H1 (cell line): ENCODE measurements at regions of chr7 and their contacts with region 1.

Region 1: GRCh38 chr7:129210256-129210988 is 14.4 kb upstream of the AHCYL2 start:
- DNase-seq: peak; percentile 41 to 98
- H3K4me3 ChIP-seq: no peak overlapping the region
- H3K27ac ChIP-seq: no peak overlapping the region
- H3K4me1 ChIP-seq: no peaks in the 10 kb centered on the region
- H3K27me3 ChIP-seq: no peaks in the 10 kb centered on the region
- CTCF ChIP-seq: peak; percentile 93 to 97 (median 94)
- EP300 ChIP-seq: no peak
- POLR2A ChIP-seq: no peak
- RAD21 ChIP-seq: peak; percentile 93 to 96

Region 2: GRCh38 chr7:129150199-129150996 is 60.0 kb before region 1 on chr7:
- CTCF ChIA-PET with region 1: interaction called, 258 read pairs
- POLR2A ChIA-PET with region 1: interaction called, 3 read pairs
- DNase-seq: no peak
- H3K4me3 ChIP-seq: no peak overlapping the region
- H3K27ac ChIP-seq: no peak overlapping the region
- H3K4me1 ChIP-seq: peaks cover 6 to 14% (median 7%) of the 10 kb centered on the region in 4 experiments
- H3K27me3 ChIP-seq: no peaks in the 10 kb centered on the region
- CTCF ChIP-seq: no peak
- EP300 ChIP-seq: no peak
- POLR2A ChIP-seq: no peak
- RAD21 ChIP-seq: no peak

Region 3: GRCh38 chr7:129193892-129194291 is 16.5 kb before region 1 on chr7:
- CTCF ChIA-PET with region 1: interaction called, 26 read pairs
- POLR2A ChIA-PET with region 1: interaction called, 8 read pairs
- DNase-seq: no peak
- H3K4me3 ChIP-seq: no peak overlapping the region
- H3K27ac ChIP-seq: no peak overlapping the region
- H3K4me1 ChIP-seq: peaks cover 3 to 7% (median 5%) of the 10 kb centered on the region in 4 experiments; a peak in 6 of 7 replicates
- H3K27me3 ChIP-seq: no peaks in the 10 kb centered on the region
- CTCF ChIP-seq: no peak
- EP300 ChIP-seq: no peak
- POLR2A ChIP-seq: no peak
- RAD21 ChIP-seq: no peak

Region 4: DNA sequence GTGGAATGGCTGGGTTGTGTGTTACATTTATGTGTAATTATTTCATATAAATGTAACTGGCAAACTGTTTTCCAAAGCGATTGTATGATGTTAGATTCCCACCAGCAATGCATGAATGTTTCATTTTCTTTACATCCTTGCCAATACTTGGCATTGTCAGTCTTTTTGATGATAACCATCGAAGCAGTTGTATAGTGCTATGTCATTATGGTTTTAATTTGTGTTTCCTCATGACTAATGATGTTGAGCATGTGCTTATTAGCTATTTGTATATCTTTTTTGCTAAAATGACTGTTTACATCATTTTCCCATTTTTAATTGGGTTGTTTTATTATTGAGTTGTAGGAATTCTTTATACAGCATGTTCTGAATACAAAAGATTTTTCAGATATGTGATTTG is 36.7 kb after region 1 on chr7:
- CTCF ChIA-PET with region 1: no interaction called
- POLR2A ChIA-PET with region 1: no interaction called
- DNase-seq: no peak
- H3K4me3 ChIP-seq: no peak overlapping the region
- H3K27ac ChIP-seq: no peak overlapping the region
- H3K4me1 ChIP-seq: peaks cover 0 to 7% (median 2%) of the 10 kb centered on the region in 4 experiments; a peak in 2 of 7 replicates
- H3K27me3 ChIP-seq: no peaks in the 10 kb centered on the region
- CTCF ChIP-seq: no peak
- EP300 ChIP-seq: no peak
- POLR2A ChIP-seq: no peak
- RAD21 ChIP-seq: no peak

Region 5: GRCh38 chr7:129271500-129272355 is 61.3 kb after region 1 on chr7:
- CTCF ChIA-PET with region 1: interaction called, 15 read pairs
- POLR2A ChIA-PET with region 1: no interaction called
- DNase-seq: peak in 1 of 2 experiments; percentile 64
- H3K4me3 ChIP-seq: no peak overlapping the region
- H3K27ac ChIP-seq: no peak overlapping the region
- H3K4me1 ChIP-seq: no peaks in the 10 kb centered on the region
- H3K27me3 ChIP-seq: no peaks in the 10 kb centered on the region
- CTCF ChIP-seq: peak in 2 of 3 experiments; percentile 76 to 81; a peak in 3 of 4 replicates
- EP300 ChIP-seq: no peak
- POLR2A ChIP-seq: no peak
- RAD21 ChIP-seq: peak; percentile 81 to 89

Region 6: DNA sequence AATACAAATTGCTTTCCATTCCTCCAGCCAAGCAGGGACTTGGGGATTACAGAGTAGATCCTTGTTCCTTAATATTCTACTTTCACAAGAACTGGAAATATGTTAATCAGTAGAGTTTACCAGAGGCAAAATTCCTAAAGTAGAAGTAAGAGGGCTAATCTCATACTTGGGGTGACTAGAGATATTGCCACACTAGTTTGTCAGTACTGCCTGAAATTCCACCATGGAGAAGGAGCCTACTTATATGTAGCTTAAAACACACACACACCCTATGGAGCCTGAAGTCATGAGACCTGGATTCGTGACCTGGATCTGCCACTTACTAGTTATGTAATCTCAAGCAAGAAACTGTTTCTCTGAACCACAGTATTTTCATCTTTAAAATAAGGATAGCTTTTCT is 257.7 kb after region 1 on chr7:
- CTCF ChIA-PET with region 1: interaction called, 24 read pairs
- POLR2A ChIA-PET with region 1: no interaction called
- DNase-seq: no peak
- H3K4me3 ChIP-seq: no peak overlapping the region
- H3K27ac ChIP-seq: no peak overlapping the region
- H3K4me1 ChIP-seq: peaks cover 0 to 8% (median 6%) of the 10 kb centered on the region in 4 experiments; a peak in 4 of 7 replicates
- H3K27me3 ChIP-seq: no peaks in the 10 kb centered on the region
- CTCF ChIP-seq: no peak
- EP300 ChIP-seq: no peak
- POLR2A ChIP-seq: no peak
- RAD21 ChIP-seq: no peak